CD4-positive, alpha-beta T cell (primary cell): ENCODE measurements at regions of chr17 and their contacts with region 1.

Region 1: DNA sequence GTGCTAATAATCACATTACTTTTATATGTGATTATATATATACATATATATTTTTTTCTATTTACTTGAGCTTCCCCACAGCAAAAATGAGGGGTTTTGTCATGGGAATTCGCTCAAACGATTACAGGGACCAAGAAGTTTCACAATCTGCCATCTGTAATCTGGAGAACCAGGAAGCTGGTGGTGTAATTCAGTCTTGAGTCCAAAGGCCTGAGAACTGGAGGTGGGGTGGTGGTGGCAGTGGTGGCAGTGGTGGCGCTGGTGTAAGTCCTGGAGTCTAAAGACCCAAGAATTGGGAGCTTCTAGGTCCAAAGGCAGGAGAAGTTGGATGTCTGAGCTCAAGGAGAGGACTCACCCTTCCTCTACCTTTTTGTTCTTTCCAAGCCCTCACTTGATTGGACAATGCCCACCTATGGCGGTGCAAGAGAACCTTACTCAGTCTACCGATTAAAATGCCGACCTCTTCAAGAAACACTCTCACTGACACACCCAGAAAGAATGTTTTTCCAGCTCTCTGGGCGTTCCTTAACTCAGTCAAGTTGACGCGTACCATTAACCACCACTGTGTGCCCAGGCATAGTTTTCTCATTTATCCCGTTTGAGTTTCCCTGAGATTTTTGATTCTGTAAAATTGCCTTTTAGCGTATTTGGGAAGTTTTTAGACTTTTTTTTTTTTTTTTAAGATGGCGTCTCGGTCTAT is 31.9 kb downstream of the POLR2A start:
- DNase-seq: no peak
- ATAC-seq: no peak
- H3K4me3 ChIP-seq: no peak overlapping the region
- H3K4me3 Mint-ChIP-seq: no peak overlapping the region
- H3K27ac ChIP-seq: no peak overlapping the region
- H3K27ac Mint-ChIP-seq: no peak overlapping the region
- H3K4me1 ChIP-seq: no peaks in the 10 kb centered on the region
- H3K4me1 Mint-ChIP-seq: no peaks in the 10 kb centered on the region
- H3K27me3 ChIP-seq: no peaks in the 10 kb centered on the region
- H3K27me3 Mint-ChIP-seq: no peaks in the 10 kb centered on the region
- CTCF ChIP-seq: no peak

Region 2: GRCh38 chr17:7502987-7503386 is 13.1 kb before region 1 on chr17:
- CTCF ChIA-PET with region 1: no interaction called
- POLR2A ChIA-PET with region 1: no interaction called
- intact Hi-C with region 1: no loop called
- DNase-seq: peak in 4 of 14 experiments; percentile 21 to 42 (median 34)
- ATAC-seq: peak; percentile 39
- H3K4me3 ChIP-seq: no peak overlapping the region
- H3K4me3 Mint-ChIP-seq: no peak overlapping the region
- H3K27ac ChIP-seq: no peak overlapping the region
- H3K27ac Mint-ChIP-seq: no peak overlapping the region
- H3K4me1 ChIP-seq: no peaks in the 10 kb centered on the region
- H3K4me1 Mint-ChIP-seq: no peaks in the 10 kb centered on the region
- H3K27me3 ChIP-seq: no peaks in the 10 kb centered on the region
- H3K27me3 Mint-ChIP-seq: no peaks in the 10 kb centered on the region
- CTCF ChIP-seq: no peak

Region 3: GRCh38 chr17:7538891-7539290 is 22.8 kb after region 1 on chr17:
- CTCF ChIA-PET with region 1: no interaction called
- POLR2A ChIA-PET with region 1: no interaction called
- intact Hi-C with region 1: no loop called
- DNase-seq: no peak
- ATAC-seq: no peak
- H3K4me3 ChIP-seq: no peak overlapping the region
- H3K4me3 Mint-ChIP-seq: no peak overlapping the region
- H3K27ac ChIP-seq: no peak overlapping the region
- H3K27ac Mint-ChIP-seq: no peak overlapping the region
- H3K4me1 ChIP-seq: no peaks in the 10 kb centered on the region
- H3K4me1 Mint-ChIP-seq: no peaks in the 10 kb centered on the region
- H3K27me3 ChIP-seq: no peaks in the 10 kb centered on the region
- H3K27me3 Mint-ChIP-seq: no peaks in the 10 kb centered on the region
- CTCF ChIP-seq: no peak

Region 4: DNA sequence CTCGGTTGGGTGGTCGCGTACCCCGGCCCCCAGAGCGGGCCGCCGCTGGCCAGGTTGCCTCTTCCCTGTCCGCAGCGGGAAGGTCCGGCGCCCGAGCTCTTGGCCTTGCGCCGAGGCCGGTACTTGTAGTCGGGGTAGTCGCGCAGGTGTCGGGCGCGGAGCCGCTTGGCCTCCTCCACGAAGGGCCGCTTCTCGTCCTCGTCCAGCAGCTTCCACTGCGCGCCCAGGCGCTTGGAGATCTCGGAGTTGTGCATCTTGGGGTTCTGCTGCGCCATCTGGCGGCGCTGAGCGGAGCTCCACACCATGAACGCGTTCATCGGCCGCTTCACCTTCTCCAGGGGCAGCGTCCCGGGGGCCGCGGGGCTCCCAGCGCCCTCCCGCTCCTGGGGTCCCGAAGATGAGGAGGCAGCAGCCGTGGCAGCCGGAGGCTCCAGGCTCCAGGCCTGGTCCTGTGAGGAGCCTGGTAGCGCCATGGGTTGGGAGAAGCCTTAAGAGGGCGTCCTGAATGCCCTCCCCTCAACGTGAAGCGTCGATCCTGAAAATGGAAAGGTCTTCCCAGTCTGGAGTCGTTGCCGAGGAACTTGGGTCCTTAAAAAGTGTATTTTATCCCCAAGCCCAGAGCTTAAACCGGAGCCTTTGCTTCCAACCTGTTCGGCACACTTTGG is 73.3 kb after region 1 on chr17:
- CTCF ChIA-PET with region 1: interaction called, 4 read pairs
- POLR2A ChIA-PET with region 1: no interaction called
- intact Hi-C with region 1: loop called (anchors 1 kb)
- DNase-seq: peak; percentile 47 to 87 (median 62)
- ATAC-seq: peak; percentile 90
- H3K4me3 ChIP-seq: no peak overlapping the region
- H3K4me3 Mint-ChIP-seq: no peak overlapping the region
- H3K27ac ChIP-seq: no peak overlapping the region
- H3K27ac Mint-ChIP-seq: no peak overlapping the region
- H3K4me1 ChIP-seq: peaks cover 31% of the 10 kb centered on the region
- H3K4me1 Mint-ChIP-seq: peaks cover 7% of the 10 kb centered on the region
- H3K27me3 ChIP-seq: no peaks in the 10 kb centered on the region
- H3K27me3 Mint-ChIP-seq: no peaks in the 10 kb centered on the region
- CTCF ChIP-seq: peak; percentile 76